Right ventricle myocardium inferior (tissue), 1 donor: ENCODE measurements at regions of chr3 and their contacts with region 1.

Region 1: GRCh38 chr3:171459942-171460724 is at the start of gene TNIK:
- DNase-seq: peak; percentile 94
- ATAC-seq: peak; percentile 97
- total RNA-seq, gene TNIK: 29.1 TPM

Region 2: DNA sequence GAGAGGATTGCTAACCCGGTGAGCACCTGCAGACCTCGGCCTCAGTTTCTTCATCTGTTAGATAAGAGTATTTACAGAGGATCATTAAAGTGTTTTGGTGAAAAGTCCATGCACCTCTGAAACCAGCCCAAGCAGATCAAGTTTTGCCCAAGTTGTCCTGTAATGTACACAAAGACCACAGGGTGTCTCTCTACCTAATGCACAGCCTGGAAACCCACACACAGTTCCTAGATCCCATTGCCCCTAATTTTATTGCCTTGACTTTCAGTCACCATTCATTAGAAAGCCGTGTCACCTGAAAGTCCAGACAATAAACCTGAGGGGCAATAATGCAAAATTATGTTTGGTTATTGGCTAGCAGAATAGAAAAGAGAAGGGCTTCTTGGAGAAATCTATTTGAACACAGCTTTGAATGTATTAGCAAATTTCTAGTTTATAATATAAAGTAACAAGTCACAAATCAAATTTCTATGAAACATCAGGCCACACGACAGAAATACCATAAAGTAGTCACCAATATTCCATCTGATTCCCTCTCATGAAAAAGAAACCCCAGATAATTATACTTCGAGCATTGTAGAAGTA is 272.3 kb before region 1 on chr3:
- intact Hi-C with region 1: loop called (anchors 2 kb)
- DNase-seq: no peak
- ATAC-seq: peak; percentile 56

Region 3: GRCh38 chr3:171320750-171321558 is 139.2 kb before region 1 on chr3:
- intact Hi-C with region 1: loop called (anchors 5 kb)
- DNase-seq: no peak
- ATAC-seq: peak; percentile 93

Region 4: DNA sequence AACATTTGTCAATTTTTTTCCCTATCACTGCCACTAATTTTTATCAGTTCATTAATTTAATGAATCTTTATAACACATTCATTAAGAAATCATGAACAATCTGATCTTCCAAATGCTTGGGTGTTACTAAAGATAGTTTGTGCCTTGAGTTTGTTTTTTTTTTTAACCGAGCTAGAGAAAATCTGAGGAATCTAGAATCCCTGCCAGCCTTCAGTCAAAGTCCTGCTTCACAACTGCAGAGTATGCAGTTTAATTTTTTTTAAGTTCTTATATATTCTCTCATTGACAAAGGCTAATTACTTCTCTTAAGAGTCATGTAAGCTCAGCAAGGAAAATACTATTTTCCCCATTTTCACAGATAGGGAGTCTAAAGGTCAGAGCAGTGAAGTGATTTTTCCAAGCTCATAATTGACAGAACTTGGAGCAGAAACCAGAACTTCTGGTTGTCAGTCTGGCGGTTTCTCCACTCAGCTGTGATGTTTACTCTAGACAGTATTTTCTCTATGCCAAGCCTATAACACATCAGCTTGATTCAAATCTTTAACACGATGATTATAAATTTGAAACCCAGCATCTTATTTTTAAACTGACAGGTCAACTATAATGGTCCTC is 55.7 kb before region 1 on chr3:
- intact Hi-C with region 1: loop called (anchors 5 kb)
- DNase-seq: no peak
- ATAC-seq: no peak

Region 5: GRCh38 chr3:171516765-171517164 is 56.6 kb after region 1 on chr3:
- intact Hi-C with region 1: no loop called
- DNase-seq: no peak
- ATAC-seq: no peak